ENCODE measurements at regions of chr19 and their contacts with region 1.

Region 1: DNA sequence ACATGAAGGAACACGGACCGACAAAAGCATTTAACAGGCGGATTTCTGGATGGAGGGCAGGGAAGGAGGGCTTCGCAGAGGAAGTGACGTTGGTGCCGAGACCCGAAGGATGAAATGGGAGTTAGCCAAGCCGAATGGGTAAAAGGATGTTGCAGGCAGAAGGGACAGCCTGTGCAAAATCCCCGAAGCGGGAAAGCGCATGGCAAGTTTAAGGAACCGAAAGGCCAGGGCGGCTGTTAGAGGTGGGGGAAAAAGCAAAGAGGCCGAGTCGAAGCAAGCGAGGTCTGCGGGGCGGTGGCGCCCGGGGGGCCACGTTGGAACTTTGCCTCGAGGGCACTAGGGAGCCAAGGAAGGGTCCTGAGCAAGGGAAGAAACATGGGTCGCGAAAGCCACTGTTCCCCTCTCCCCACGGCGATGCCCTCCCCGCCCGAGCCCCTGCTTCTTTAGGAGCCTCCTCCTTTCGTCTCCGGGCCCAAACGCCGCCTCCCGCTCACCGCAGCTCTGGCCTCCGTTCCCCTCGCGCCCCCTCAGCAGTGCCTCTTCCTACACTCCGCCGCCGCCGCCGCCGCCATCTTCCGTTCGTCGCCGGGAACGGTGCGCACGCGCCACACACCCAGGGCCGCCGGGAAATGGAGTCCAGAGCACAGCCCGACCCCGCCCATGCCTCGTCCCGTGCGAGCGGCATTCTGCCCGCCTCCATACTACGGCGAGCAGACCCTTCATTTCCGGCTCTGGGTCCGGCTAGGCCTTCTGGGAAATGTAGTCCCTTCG is at the start of gene SYMPK:
- DNase-seq: peak; percentile 99
- H3K4me3 Mint-ChIP-seq: peak within 1 kb of the TSS; percentile 94
- H3K27ac Mint-ChIP-seq: peak within 1 kb of the TSS; percentile 95
- H3K4me1 Mint-ChIP-seq: peaks cover 29% of the 10 kb centered on the region
- H3K27me3 Mint-ChIP-seq: peaks cover 31% of the 10 kb centered on the region
- total RNA-seq, gene SYMPK: 118 and 120 TPM in 2 replicates

Region 2: DNA sequence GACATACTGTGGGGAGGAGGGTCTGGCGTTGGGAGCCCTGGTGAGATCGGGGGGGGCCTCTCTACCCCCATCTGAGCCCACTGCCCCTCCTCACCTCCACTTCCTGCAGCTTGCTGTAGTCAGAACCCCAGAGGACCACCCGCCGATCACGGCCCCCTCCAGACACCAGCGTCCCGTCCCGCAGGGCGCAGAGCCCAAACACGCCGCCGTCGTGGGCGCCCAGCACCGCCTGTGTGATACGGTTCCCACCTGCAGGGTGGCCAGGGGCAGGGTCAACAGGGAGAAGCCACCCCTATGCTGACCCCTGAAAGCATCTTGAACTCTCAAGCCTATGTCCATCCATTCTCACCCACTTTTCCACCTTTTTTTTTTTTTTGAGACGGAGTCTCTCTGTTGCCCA is 241.4 kb before region 1 on chr19:
- intact Hi-C with region 1: no loop called
- DNase-seq: no peak
- H3K4me3 Mint-ChIP-seq: no peak overlapping the region
- H3K27ac Mint-ChIP-seq: no peak overlapping the region
- H3K4me1 Mint-ChIP-seq: peaks cover 4% of the 10 kb centered on the region
- H3K27me3 Mint-ChIP-seq: no peaks in the 10 kb centered on the region

Region 3: DNA sequence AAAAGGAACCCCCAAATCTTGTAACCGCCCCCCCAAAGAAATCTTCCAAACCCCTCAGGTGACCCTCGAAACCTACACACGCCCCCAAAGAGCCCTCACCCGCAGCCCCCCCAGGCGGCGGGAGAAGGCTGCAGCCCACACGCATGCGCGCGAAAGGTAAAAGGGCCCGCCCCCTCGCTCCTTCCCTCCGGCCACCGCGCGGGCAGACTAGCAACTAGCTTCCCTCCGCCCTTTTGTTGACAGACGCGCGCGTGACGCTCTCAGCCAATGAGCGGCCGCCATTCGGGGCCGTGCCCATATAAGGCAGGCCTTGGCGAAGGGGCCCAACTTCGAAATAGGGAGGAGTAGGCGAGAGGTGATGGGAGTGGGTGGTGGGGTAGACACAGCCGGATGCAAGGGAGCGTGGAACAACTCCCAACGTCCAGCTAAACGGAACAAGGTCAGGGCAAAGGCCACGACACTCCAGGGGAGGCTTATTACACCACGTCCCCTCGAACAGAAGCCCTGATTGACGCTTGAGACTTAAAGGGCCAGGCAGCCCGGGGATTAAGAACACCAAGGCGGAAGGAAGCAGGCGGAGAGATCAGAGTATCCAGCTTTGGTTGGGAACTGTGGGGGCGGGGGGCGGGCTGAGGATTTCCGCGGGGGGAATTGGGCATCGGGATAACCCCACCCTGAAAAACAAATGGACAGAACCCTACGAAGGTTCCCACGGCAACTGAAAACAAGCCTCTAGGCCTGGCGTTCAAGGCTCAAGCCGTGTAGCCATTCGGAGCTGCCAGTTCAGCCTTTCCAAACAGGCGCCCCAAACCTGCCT is 145.4 kb before region 1 on chr19:
- intact Hi-C with region 1: loop called (anchors 1 kb)
- DNase-seq: peak; percentile 99
- H3K4me3 Mint-ChIP-seq: peak overlapping the region; percentile 96
- H3K27ac Mint-ChIP-seq: peak overlapping the region; percentile 96
- H3K4me1 Mint-ChIP-seq: peaks cover 40% of the 10 kb centered on the region
- H3K27me3 Mint-ChIP-seq: no peaks in the 10 kb centered on the region

Region 4: GRCh38 chr19:45792470-45793177 is 70.1 kb before region 1 on chr19 and contains the start of gene DMWD:
- intact Hi-C with region 1: loop called (anchors 1 kb)
- DNase-seq: peak; percentile 99
- H3K4me3 Mint-ChIP-seq: peak within 1 kb of the TSS; percentile 89
- H3K27ac Mint-ChIP-seq: peak within 1 kb of the TSS; percentile 95
- H3K4me1 Mint-ChIP-seq: peaks cover 30% of the 10 kb centered on the region
- H3K27me3 Mint-ChIP-seq: peaks cover 52% of the 10 kb centered on the region
- total RNA-seq, gene DMWD: 50.0 and 55.8 TPM in 2 replicates

Region 5: DNA sequence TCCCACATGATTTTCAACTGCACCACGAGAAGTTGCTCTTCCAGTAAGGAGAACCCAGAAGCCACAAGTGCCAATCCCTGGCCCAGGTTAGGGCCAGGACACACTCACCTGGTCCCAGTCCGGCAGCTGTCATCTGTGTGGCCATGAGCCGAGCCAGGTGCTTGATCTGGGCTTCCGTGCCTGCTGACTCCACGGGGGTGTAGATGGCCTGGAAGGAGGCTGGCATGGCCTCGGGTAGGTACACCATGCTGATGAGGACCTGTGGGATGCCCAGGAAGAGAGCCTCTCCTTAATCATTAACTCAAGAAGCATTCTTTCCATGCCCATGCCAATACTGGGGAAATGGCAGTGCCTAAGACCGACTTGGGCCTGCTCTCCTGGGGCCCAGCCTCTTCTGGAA is 27.8 kb before region 1 on chr19:
- intact Hi-C with region 1: no loop called
- DNase-seq: no peak
- H3K4me3 Mint-ChIP-seq: no peak overlapping the region
- H3K27ac Mint-ChIP-seq: no peak overlapping the region
- H3K4me1 Mint-ChIP-seq: no peaks in the 10 kb centered on the region
- H3K27me3 Mint-ChIP-seq: no peaks in the 10 kb centered on the region

Region 6: GRCh38 chr19:45886427-45887199 is 23.9 kb after region 1 on chr19:
- intact Hi-C with region 1: loop called (anchors 1 kb)
- DNase-seq: peak; percentile 88
- H3K4me3 Mint-ChIP-seq: peak overlapping the region; percentile 88
- H3K27ac Mint-ChIP-seq: peak overlapping the region; percentile 95
- H3K4me1 Mint-ChIP-seq: peaks cover 13% of the 10 kb centered on the region
- H3K27me3 Mint-ChIP-seq: peaks cover 1% of the 10 kb centered on the region

Region 7: DNA sequence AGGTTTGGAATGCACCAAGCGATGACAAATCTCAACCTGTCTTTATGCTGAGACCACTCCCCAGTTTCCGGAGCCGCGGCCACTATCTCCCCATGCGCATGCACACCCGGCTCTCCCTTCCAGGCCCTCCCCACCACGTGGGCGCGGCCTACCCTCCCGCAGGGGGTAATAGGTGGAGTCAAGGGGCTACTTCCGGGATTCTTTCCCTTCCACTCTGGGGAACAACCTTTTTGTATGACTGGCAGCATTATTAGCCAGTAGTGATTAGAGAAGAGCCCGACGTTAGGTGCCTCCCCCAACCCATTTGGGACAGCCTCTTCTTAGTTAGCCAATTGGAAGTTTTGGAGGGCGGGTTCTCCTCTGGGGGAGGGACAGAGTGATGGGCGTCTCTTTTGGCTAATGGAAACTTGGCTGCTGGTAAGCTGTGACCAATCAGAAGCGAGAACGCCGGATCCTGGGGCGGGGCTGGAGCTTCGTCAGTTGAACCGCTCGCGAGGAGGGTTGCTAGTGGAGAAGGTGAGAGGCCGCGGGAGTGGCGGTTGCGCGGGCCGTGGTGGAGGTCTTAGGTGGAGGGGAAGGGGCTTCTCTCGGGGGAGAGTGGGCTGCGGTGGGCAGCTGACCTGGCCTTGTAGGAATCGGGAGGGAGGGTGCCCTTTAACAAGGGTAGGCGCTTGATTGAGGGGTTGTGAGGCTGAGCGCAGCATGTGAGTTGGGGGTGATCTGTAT is 132.4 kb after region 1 on chr19 and contains the start of gene CCDC61:
- intact Hi-C with region 1: loop called (anchors 1 kb)
- DNase-seq: peak; percentile 96
- H3K4me3 Mint-ChIP-seq: no peak within 1 kb of the TSS
- H3K27ac Mint-ChIP-seq: no peak within 1 kb of the TSS
- H3K4me1 Mint-ChIP-seq: peaks cover 17% of the 10 kb centered on the region
- H3K27me3 Mint-ChIP-seq: peaks cover 4% of the 10 kb centered on the region
- total RNA-seq, gene CCDC61: 24.0 and 24.1 TPM in 2 replicates

Measured in activated T-helper 1 cell treated with anti-CD3 and anti-CD28 coated beads, Interleukin-12 subunit alpha, Interleukin-12 subunit beta, Interleukin-2, Interleukin-4 antibody, amounts not matched to agents 30 ng/mL and 10 ng/mL and 1 ng/mL, durations not matched to agents 14 hours and 24 hours and 36 hours (primary cell).